Sciatic nerve (tissue), 2 donors: ENCODE measurements at regions of chrX and their contacts with region 1.

Region 1: GRCh38 chrX:110450050-110450449 is 91.4 kb downstream of the RTL9 start:
- DNase-seq: peak; percentile 88
- ATAC-seq: peak; percentile 93

Region 2: GRCh38 chrX:109656774-109657173 is 793.3 kb before region 1 on chrX:
- intact Hi-C with region 1: loop called (anchors 5 kb)
- DNase-seq: no peak
- ATAC-seq: no peak

Region 3: DNA sequence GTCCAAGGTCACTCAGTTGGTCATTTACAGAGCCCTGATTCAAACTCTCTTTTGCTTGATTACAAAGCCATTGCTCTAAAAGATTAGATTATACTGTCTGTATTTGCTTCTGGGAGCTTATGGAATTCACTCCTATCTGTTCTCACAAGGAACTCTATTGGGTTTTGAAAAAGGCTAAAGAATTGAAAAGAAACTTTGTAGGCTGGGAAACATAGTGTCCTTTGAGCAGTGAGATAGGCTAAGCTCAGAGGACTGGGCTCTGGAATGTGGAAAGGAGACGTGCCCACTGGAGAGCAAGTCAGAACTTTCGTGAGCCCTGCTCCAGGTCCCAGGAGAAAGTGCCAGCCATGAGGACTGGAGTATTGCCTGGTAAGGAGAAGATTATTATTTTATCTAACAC is 91.5 kb before region 1 on chrX and contains the start of gene RTL9:
- intact Hi-C with region 1: no loop called
- DNase-seq: no peak
- ATAC-seq: no peak
- total RNA-seq, gene RTL9: 0.09 TPM

Region 4: DNA sequence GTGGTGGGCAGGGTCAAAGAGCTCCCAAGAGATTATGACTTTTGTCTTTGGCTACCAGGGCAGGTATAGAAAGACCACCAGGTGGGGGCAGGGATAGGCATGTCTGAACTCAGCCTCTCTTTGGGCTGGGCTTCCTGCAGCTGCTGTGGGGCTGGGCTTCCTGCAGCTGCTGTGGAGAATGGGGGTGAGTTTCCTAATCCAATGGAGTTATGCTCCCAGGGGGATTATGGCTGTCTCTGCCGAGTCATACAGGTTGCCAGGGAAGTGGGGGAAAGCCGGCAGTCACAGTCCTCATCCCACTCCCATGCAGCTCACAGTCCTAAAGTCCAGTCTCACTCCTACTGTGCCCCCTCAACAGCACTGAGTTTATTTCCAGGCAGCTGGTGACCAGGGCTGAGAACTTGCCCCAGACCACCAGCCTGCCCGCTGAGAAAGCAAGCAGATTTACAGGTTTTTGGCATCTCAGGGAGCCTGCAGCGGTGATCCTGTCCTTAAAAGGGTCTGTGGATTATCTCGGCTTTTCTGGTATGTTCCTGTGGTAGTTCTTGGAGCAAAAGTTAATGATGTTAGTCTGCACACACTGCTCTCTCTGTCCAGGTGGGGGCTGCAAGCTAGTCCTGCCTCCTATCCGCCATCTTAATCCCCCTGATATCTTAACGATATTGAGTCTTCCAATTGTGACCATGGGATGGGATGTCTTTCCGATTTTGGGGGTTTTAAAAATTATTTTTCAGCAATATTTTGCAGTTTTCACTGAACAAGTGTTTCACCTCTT is 42.0 kb after region 1 on chrX:
- intact Hi-C with region 1: no loop called
- DNase-seq: no peak
- ATAC-seq: no peak

Region 5: GRCh38 chrX:110847334-110847733 is 397.3 kb after region 1 on chrX:
- intact Hi-C with region 1: loop called (anchors 5 kb)
- DNase-seq: no peak
- ATAC-seq: peak; percentile 83